Activated CD4-positive, alpha-beta T cell treated with anti-CD3 and anti-CD28 coated beads for 36 hours (primary cell): ENCODE measurements at regions of chr2 and their contacts with region 1.

Region 1: DNA sequence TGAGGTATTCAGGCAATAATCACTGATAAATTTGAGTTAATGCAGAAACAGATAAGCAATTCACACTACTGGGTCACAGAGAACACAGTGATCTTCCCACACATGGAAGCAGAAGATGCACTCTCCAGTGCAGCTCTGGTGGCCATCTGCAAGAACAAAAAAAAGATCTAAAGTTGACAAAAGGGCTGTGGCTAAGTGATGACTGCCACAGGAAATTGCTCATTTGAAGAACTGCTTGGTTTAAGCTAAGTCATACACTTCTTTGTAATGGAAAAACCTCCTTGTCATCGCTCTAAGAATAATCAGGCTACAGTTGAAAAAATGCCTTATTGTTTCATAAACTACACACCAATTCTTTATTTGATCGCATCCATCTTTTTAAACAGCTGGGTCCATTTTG is 115.1 kb downstream of the DTNB start:
- DNase-seq: peak; percentile 67
- ATAC-seq: peak; percentile 88
- H3K4me3 Mint-ChIP-seq: no peak overlapping the region
- H3K27ac Mint-ChIP-seq: peak overlapping the region; percentile 74
- H3K4me1 Mint-ChIP-seq: peaks cover 60% of the 10 kb centered on the region
- H3K27me3 Mint-ChIP-seq: no peaks in the 10 kb centered on the region

Region 2: DNA sequence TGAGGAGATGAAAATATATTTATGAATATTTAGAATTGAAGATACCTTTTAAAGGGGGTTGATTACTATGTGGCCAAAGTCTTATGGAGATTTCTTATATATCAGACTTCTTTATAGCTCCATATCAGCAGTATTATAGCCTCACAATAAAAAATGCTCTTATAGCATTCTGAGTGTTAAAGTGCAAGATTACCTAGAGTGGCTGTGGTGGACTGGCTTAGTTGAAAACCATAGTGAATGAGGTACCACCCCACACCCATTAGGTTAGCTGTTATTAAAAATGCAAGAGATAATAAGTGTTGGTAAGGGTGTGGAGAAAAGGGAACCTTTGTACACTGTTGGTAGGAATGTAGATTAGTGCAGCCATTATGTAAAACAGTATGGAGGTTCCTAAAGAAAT is 1027.5 kb before region 1 on chr2:
- CTCF ChIA-PET with region 1: no interaction called
- POLR2A ChIA-PET with region 1: no interaction called
- intact Hi-C with region 1: no loop called
- DNase-seq: no peak
- ATAC-seq: no peak
- H3K4me3 Mint-ChIP-seq: no peak overlapping the region
- H3K27ac Mint-ChIP-seq: no peak overlapping the region
- H3K4me1 Mint-ChIP-seq: peaks cover 22% of the 10 kb centered on the region
- H3K27me3 Mint-ChIP-seq: no peaks in the 10 kb centered on the region

Region 3: DNA sequence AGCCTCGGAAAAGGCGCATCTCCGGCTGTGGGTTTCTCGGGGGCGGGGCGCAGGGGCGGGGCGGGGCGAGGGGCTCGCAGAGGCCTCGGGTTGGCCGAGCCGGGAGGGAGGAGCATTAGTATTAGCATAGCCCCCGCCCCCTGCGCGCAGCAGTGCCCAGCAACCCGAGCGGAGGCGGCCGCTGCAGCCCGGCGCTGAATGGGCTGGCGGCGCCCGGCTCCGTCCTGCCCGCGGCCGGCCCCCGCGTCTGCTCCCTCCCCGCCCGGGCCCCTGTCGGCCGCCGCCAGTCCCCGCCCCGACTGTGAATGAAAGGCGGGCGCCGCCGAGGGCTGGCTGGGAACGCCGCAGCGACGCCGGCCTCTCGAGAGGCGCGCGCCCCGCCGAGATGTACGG is 516.3 kb before region 1 on chr2 and contains the start of gene EFR3B:
- CTCF ChIA-PET with region 1: no interaction called
- POLR2A ChIA-PET with region 1: no interaction called
- intact Hi-C with region 1: loop called in 1 of 2 experiments (anchors 10 kb)
- DNase-seq: peak; percentile 93
- ATAC-seq: peak; percentile 84
- H3K4me3 Mint-ChIP-seq: peak within 1 kb of the TSS; percentile 71
- H3K27ac Mint-ChIP-seq: no peak within 1 kb of the TSS
- H3K4me1 Mint-ChIP-seq: peaks cover 32% of the 10 kb centered on the region
- H3K27me3 Mint-ChIP-seq: peaks cover 38% of the 10 kb centered on the region
- total RNA-seq, gene EFR3B: 1.0 to 1.1 TPM

Region 4: DNA sequence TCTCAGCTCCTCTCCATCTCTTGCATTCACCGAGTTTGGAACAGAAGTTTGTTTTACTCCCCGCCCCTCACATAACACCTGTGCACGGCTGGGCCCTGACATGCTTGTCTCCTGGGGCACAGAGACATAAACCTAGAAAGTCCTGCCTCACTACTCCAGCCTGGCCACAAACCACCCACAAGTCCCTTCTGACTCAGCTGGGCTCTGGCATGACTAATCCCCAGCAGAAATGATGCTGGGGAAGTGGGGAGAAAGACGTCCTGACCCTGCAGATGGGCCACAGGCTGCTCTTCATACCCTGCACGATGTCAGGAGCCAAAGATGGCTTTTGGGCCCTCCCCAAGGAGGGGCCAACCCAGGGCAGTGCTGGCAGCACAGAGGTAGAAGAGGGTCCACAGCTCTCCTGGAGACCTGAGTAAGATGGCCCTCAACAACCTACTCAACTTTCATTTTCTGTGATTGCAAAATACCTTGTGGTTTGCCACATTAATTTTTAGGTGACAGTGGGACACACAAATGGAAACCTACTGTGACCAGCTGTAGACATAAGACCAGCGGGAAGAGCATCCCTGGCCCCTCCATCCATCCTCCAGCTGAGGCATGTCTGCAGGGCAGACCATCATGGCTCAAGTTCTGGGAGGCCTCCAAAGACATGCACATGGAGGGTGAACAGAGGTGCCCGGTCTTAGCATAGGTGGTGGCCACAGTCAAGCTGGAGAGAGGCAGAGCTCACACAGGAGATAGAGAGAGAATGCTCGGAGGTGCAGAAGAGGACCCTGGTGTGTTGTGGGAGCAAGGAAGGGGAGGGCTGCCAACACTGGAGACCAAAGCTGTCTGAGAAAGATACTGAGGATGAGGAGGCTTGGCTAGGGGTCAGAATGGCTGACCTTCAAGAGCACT is 256.6 kb before region 1 on chr2:
- CTCF ChIA-PET with region 1: no interaction called
- POLR2A ChIA-PET with region 1: no interaction called
- intact Hi-C with region 1: loop called in 1 of 2 experiments (anchors 1 kb)
- DNase-seq: peak; percentile 90
- ATAC-seq: peak; percentile 95
- H3K4me3 Mint-ChIP-seq: no peak overlapping the region
- H3K27ac Mint-ChIP-seq: peak overlapping the region; percentile 48
- H3K4me1 Mint-ChIP-seq: peaks cover 74% of the 10 kb centered on the region
- H3K27me3 Mint-ChIP-seq: no peaks in the 10 kb centered on the region

Region 5: GRCh38 chr2:25453199-25453905 is 104.9 kb before region 1 on chr2:
- CTCF ChIA-PET with region 1: no interaction called
- POLR2A ChIA-PET with region 1: interaction called, 3 read pairs
- intact Hi-C with region 1: loop called (anchors 1 to 2 kb)
- DNase-seq: peak; percentile 69
- ATAC-seq: peak; percentile 97
- H3K4me3 Mint-ChIP-seq: peak overlapping the region; percentile 19
- H3K27ac Mint-ChIP-seq: peak overlapping the region; percentile 91
- H3K4me1 Mint-ChIP-seq: peaks cover 30% of the 10 kb centered on the region
- H3K27me3 Mint-ChIP-seq: no peaks in the 10 kb centered on the region

Region 6: DNA sequence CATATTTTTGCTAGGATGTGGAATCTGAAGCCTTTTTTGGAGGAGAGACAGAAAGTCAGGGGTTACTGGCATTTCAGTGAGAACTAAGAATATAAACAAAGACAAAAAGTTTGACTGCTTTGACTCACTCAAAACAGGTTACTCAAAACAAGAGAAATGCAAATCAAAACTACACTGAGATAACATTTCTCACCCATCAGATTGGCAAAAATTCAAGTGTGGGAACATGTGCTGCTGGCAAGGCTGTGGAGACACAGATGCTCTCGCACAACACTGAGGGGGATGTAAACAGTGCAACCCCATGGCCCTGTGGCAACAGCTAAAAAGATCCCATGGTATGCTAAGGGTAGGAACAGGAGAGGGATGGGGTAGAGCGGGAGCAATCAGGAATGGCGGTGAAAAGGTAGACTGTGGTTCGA is 28.5 kb after region 1 on chr2:
- CTCF ChIA-PET with region 1: interaction called, 4 read pairs
- POLR2A ChIA-PET with region 1: no interaction called
- intact Hi-C with region 1: loop called (anchors 1 kb)
- DNase-seq: peak; percentile 65
- ATAC-seq: peak; percentile 88
- H3K4me3 Mint-ChIP-seq: no peak overlapping the region
- H3K27ac Mint-ChIP-seq: peak overlapping the region; percentile 68
- H3K4me1 Mint-ChIP-seq: peaks cover 18% of the 10 kb centered on the region
- H3K27me3 Mint-ChIP-seq: no peaks in the 10 kb centered on the region